Naive thymus-derived CD4-positive, alpha-beta T cell (primary cell): ENCODE measurements at regions of chr17 and their contacts with region 1.

Region 1: GRCh38 chr17:82698065-82698973 is at the start of gene RAB40B:
- DNase-seq: peak; percentile 94 to 99 (median 99)
- ATAC-seq: peak; percentile 98
- H3K4me3 ChIP-seq: peak within 1 kb of the TSS; percentile 83
- H3K4me3 Mint-ChIP-seq: peak within 1 kb of the TSS; percentile 83 to 96 (median 89)
- H3K27ac ChIP-seq: peak within 1 kb of the TSS; percentile 61
- H3K27ac Mint-ChIP-seq: peak within 1 kb of the TSS in 6 of 9 donors; percentile 33 to 87 (median 76)
- H3K4me1 ChIP-seq: peaks cover 5 to 8% of the 10 kb centered on the region in 2 donors
- H3K4me1 Mint-ChIP-seq: peaks cover 0 to 16% (median 7%) of the 10 kb centered on the region in 7 donors
- H3K27me3 ChIP-seq: no peaks in the 10 kb centered on the region
- H3K27me3 Mint-ChIP-seq: peaks cover 0 to 16% (median 0%) of the 10 kb centered on the region in 5 donors
- total RNA-seq, gene RAB40B: 2.8 to 6.1 (median 3.6) TPM

Region 2: GRCh38 chr17:82465023-82465603 is 233.2 kb before region 1 on chr17:
- CTCF ChIA-PET with region 1: no interaction called
- POLR2A ChIA-PET with region 1: no interaction called
- intact Hi-C with region 1: no loop called
- DNase-seq: no peak
- ATAC-seq: no peak
- H3K4me3 ChIP-seq: no peak overlapping the region
- H3K4me3 Mint-ChIP-seq: no peak overlapping the region
- H3K27ac ChIP-seq: no peak overlapping the region
- H3K27ac Mint-ChIP-seq: peak overlapping the region in 2 of 9 donors; percentile 64 to 70
- H3K4me1 ChIP-seq: peaks cover 0 to under 1% of the 10 kb centered on the region in 2 donors
- H3K4me1 Mint-ChIP-seq: peaks cover 14 to 71% (median 19%) of the 10 kb centered on the region in 7 donors
- H3K27me3 ChIP-seq: no peaks in the 10 kb centered on the region
- H3K27me3 Mint-ChIP-seq: no peaks in the 10 kb centered on the region

Region 3: DNA sequence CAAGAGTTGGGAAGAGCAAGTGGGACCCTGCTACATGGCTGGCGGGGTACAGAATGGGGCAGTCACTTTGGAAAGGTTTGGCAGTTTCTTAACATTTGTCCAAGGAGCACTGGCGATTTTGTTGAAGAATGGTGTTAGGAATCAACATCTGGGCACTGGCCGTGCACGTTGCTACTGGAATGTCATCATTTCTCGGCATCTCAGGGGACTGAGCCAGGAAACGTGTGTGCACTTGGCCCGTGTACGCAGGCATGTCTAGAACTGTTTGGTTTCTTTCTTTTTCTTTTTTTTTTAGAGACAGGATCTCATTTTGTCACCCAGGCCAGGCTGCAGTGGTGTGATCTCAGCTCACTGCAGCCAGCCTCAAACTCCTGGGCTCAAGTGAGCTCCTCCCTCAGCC is 196.1 kb before region 1 on chr17:
- CTCF ChIA-PET with region 1: no interaction called
- POLR2A ChIA-PET with region 1: no interaction called
- intact Hi-C with region 1: no loop called
- DNase-seq: no peak
- ATAC-seq: no peak
- H3K4me3 ChIP-seq: no peak overlapping the region
- H3K4me3 Mint-ChIP-seq: no peak overlapping the region
- H3K27ac ChIP-seq: no peak overlapping the region
- H3K27ac Mint-ChIP-seq: peak overlapping the region in 1 of 9 donors; percentile 59
- H3K4me1 ChIP-seq: no peaks in the 10 kb centered on the region
- H3K4me1 Mint-ChIP-seq: peaks cover 8 to 18% (median 10%) of the 10 kb centered on the region in 7 donors
- H3K27me3 ChIP-seq: no peaks in the 10 kb centered on the region
- H3K27me3 Mint-ChIP-seq: peaks cover 0 to 2% (median 0%) of the 10 kb centered on the region in 5 donors

Region 4: DNA sequence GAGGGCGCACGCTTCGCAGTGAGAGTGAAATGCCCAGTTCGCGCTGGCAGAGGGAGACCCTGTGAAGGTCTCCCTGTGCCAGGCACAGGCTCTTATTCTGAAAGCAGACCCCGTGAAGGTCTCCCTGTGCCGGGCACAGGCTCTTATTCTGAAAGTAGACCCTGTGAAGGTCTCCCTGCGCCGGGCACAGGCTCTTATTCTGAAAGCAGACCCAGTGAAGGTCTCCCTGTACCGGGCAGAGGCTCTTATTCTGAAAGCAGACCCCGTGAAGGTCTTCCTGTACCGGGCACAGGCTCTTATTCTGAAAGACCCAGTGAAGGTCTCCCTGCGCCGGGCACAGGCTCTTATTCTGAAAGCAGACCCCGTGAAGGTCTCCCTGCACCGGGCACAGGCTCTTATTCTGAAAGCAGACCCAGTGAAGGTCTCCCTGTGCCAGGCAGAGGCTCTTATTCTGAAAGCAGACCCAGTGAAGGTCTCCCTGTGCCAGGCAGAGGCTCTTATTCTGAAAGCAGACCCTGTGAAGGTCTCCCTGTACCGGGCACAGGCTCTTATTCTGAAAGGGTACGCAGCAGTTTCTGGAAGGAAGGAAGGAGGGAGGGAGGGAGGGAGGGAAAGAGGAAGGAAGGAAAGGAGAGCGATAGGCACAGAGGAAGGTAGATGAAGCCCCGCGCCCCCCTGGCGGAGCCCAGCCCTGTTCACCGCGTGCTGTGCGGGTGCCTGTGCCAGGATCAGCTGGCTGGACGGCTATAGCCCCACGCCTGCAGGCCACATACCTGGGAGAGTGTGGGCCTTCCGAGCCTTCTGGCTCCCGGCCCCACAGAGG is 105.3 kb before region 1 on chr17:
- CTCF ChIA-PET with region 1: no interaction called
- POLR2A ChIA-PET with region 1: no interaction called
- intact Hi-C with region 1: loop called in 1 of 2 experiments (anchors 10 kb)
- DNase-seq: peak in 8 of 9 donors; percentile 28 to 81 (median 71)
- ATAC-seq: peak; percentile 68
- H3K4me3 ChIP-seq: peak overlapping the region; percentile 81
- H3K4me3 Mint-ChIP-seq: peak overlapping the region; percentile 72 to 86 (median 80)
- H3K27ac ChIP-seq: peak overlapping the region; percentile 70
- H3K27ac Mint-ChIP-seq: peak overlapping the region; percentile 75 to 94 (median 90)
- H3K4me1 ChIP-seq: peaks cover 24 to 31% of the 10 kb centered on the region in 2 donors
- H3K4me1 Mint-ChIP-seq: peaks cover 19 to 52% (median 36%) of the 10 kb centered on the region in 7 donors
- H3K27me3 ChIP-seq: no peaks in the 10 kb centered on the region
- H3K27me3 Mint-ChIP-seq: no peaks in the 10 kb centered on the region

Region 5: GRCh38 chr17:82636626-82637598 is 61.4 kb before region 1 on chr17:
- CTCF ChIA-PET with region 1: no interaction called
- POLR2A ChIA-PET with region 1: no interaction called
- intact Hi-C with region 1: no loop called
- DNase-seq: no peak
- ATAC-seq: no peak
- H3K4me3 ChIP-seq: no peak overlapping the region
- H3K4me3 Mint-ChIP-seq: peak overlapping the region in 4 of 10 donors; percentile 2 to 48 (median 26)
- H3K27ac ChIP-seq: no peak overlapping the region
- H3K27ac Mint-ChIP-seq: peak overlapping the region in 5 of 9 donors; percentile 10 to 89 (median 54)
- H3K4me1 ChIP-seq: peaks cover 0 to 4% of the 10 kb centered on the region in 2 donors
- H3K4me1 Mint-ChIP-seq: peaks cover 25 to 59% (median 48%) of the 10 kb centered on the region in 7 donors
- H3K27me3 ChIP-seq: no peaks in the 10 kb centered on the region
- H3K27me3 Mint-ChIP-seq: no peaks in the 10 kb centered on the region

Region 6: GRCh38 chr17:82751571-82752370 is 53.5 kb after region 1 on chr17 and contains the start of gene TBCD:
- CTCF ChIA-PET with region 1: no interaction called
- POLR2A ChIA-PET with region 1: interaction called, 3 read pairs
- intact Hi-C with region 1: loop called in 1 of 2 experiments (anchors 1 kb)
- DNase-seq: peak; percentile 80 to 95 (median 90)
- ATAC-seq: peak; percentile 91
- H3K4me3 ChIP-seq: peak within 1 kb of the TSS; percentile 80
- H3K4me3 Mint-ChIP-seq: peak within 1 kb of the TSS; percentile 68 to 91 (median 80)
- H3K27ac ChIP-seq: peak within 1 kb of the TSS; percentile 74
- H3K27ac Mint-ChIP-seq: peak within 1 kb of the TSS in 7 of 9 donors; percentile 11 to 77 (median 58)
- H3K4me1 ChIP-seq: peaks cover 7 to 8% of the 10 kb centered on the region in 2 donors
- H3K4me1 Mint-ChIP-seq: peaks cover 18 to 34% (median 26%) of the 10 kb centered on the region in 7 donors
- H3K27me3 ChIP-seq: no peaks in the 10 kb centered on the region
- H3K27me3 Mint-ChIP-seq: no peaks in the 10 kb centered on the region
- total RNA-seq, gene TBCD: 99.2 to 255 (median 226) TPM

Region 7: GRCh38 chr17:82836823-82837357 is 138.6 kb after region 1 on chr17:
- CTCF ChIA-PET with region 1: no interaction called
- POLR2A ChIA-PET with region 1: no interaction called
- intact Hi-C with region 1: no loop called
- DNase-seq: no peak
- ATAC-seq: no peak
- H3K4me3 ChIP-seq: no peak overlapping the region
- H3K4me3 Mint-ChIP-seq: no peak overlapping the region
- H3K27ac ChIP-seq: no peak overlapping the region
- H3K27ac Mint-ChIP-seq: peak overlapping the region in 4 of 9 donors; percentile 4 to 63 (median 19)
- H3K4me1 ChIP-seq: no peaks in the 10 kb centered on the region
- H3K4me1 Mint-ChIP-seq: peaks cover 0 to 8% (median 1%) of the 10 kb centered on the region in 7 donors
- H3K27me3 ChIP-seq: no peaks in the 10 kb centered on the region
- H3K27me3 Mint-ChIP-seq: no peaks in the 10 kb centered on the region